ENCODE measurements at regions of chrX and their contacts with region 1.

Region 1: GRCh38 chrX:17680732-17681413 is 56.4 kb upstream of the SCML1 start:
- DNase-seq: no peak
- ATAC-seq: no peak
- H3K4me3 Mint-ChIP-seq: no peak overlapping the region
- H3K27ac Mint-ChIP-seq: no peak overlapping the region
- H3K4me1 Mint-ChIP-seq: peaks cover 29% of the 10 kb centered on the region
- H3K27me3 Mint-ChIP-seq: no peaks in the 10 kb centered on the region
- CTCF ChIP-seq: no peak

Region 2: DNA sequence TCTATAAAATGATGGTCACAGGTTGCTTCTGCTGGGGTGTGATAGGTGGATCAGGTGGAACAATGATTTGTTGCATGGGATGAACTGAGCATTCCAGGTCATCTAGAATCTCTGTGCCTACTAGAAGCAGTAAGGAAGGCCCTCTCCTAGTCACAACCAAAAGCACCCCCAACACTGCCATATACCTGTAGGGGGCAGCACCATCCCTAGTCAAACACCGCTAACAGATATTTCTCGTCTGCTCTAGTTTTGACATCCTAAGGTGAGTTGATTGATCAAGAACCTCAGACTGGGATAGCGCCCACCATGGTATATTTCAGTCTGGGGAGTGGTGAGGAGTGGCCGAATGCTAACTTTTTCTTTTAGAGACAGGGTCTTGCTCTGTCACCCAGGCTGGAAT is 145.6 kb before region 1 on chrX:
- CTCF ChIA-PET with region 1: no interaction called
- POLR2A ChIA-PET with region 1: no interaction called
- intact Hi-C with region 1: loop called (anchors 5 kb)
- DNase-seq: peak; percentile 62
- ATAC-seq: peak; percentile 76
- H3K4me3 Mint-ChIP-seq: no peak overlapping the region
- H3K27ac Mint-ChIP-seq: no peak overlapping the region
- H3K4me1 Mint-ChIP-seq: peaks cover 14% of the 10 kb centered on the region
- H3K27me3 Mint-ChIP-seq: no peaks in the 10 kb centered on the region
- CTCF ChIP-seq: no peak

Region 3: DNA sequence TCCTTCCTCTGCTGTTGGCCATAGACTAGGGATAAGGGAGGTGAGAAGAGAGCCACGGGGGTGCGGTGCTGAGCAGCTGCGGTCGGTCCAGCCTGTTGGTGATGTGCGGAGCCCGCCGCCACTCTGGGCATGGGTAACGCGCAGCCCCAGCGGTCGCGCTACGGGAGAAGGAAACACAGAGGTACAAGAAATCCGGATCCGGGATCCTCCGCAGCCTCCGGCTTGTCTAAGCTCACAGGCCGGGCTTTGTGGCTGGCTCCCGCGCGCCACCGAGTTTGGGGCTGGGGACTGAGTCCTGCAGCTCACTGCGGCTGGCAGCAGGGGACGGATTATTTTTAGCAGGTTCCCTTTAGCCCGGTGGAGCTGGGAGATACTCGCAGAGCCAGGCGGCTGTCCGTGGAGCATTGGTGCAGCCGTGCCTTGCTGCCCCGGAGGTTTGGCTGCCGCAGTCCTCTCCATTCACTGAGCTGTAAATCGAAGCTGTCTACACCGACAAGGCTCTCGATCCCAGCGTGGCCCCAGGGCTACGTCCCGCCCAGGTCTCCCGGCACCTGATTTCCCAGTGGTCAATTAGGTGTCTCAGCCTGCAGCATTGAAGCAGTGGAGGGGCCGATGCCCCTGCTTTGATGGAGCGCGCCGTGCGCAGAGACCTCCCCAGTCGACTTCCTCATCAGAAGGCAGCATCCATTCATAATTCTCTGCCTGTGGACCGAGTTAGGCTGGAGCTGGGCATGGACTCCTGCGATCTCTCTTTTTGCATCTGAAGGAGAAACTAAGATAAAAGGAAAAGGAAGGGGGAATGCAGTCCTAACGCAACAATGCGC is 25.4 kb before region 1 on chrX:
- CTCF ChIA-PET with region 1: no interaction called
- POLR2A ChIA-PET with region 1: interaction called, 3 read pairs
- intact Hi-C with region 1: loop called (anchors 2 kb)
- DNase-seq: peak; percentile 31
- ATAC-seq: no peak
- H3K4me3 Mint-ChIP-seq: peak overlapping the region; percentile 85
- H3K27ac Mint-ChIP-seq: peak overlapping the region; percentile 85
- H3K4me1 Mint-ChIP-seq: peaks cover 30% of the 10 kb centered on the region
- H3K27me3 Mint-ChIP-seq: peaks cover 1% of the 10 kb centered on the region
- CTCF ChIP-seq: no peak

Measured in activated CD8-positive, alpha-beta T cell treated with anti-CD3 and anti-CD28 coated beads for 36 hours (primary cell).